Heart right ventricle (tissue), 16 donors: ENCODE measurements at regions of chr3 and their contacts with region 1.

Region 1: GRCh38 chr3:129058441-129059200 is 2.0 kb upstream of the GP9 start:
- DNase-seq: no peak
- ATAC-seq: peak in 1 of 8 donors; percentile 28
- H3K4me3 ChIP-seq: no peak overlapping the region
- H3K27ac ChIP-seq: no peak overlapping the region
- H3K4me1 ChIP-seq: peaks cover 0 to 30% (median 5%) of the 10 kb centered on the region in 9 donors
- H3K27me3 ChIP-seq: no peaks in the 10 kb centered on the region
- CTCF ChIP-seq: peak in 1 of 9 donors; percentile 5

Region 2: DNA sequence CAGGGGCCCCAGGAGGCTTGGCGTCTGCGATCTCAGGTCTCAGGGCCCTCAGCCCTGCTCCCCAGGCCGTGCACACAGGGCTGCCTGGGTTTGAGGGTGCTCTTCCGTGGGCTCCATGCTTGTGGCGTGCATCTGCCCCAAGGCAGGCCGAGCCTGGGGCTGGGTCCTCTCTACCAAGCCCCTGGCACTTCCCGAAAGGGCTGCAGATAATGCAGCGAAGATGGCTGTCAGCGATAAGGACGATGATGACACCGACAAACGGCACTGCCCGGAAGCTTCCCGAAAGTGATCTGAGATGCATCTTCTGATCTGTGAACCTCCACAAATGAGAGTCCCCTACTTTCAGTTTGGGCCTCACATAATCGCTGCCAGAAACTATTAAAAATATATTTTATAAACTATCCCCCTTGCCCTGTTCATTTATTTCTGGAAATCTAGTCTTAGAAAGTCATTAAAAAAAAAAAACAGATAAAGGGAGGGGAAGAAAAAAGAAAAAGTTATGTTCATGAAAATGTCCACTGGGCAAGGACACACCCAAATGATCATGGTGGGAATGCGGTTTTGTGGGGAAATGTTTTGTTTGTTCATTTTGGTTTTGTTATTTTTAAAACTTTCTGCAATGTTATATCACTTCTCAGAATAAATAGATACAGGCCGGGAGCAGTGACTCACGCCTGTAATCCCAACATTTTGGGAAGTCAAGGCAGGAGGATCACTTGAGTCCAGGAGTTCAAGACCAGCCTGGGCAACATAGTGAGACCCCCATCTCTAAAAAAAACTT is 459.5 kb before region 1 on chr3:
- intact Hi-C with region 1: no loop called
- DNase-seq: no peak
- ATAC-seq: no peak
- H3K4me3 ChIP-seq: no peak overlapping the region
- H3K27ac ChIP-seq: no peak overlapping the region
- H3K4me1 ChIP-seq: peaks cover 0 to 18% (median 0%) of the 10 kb centered on the region in 9 donors
- H3K27me3 ChIP-seq: no peaks in the 10 kb centered on the region
- CTCF ChIP-seq: no peak

Region 3: GRCh38 chr3:129119365-129120100 is 60.9 kb after region 1 on chr3:
- intact Hi-C with region 1: loop called in 2 of 10 experiments (anchors 5 to 10 kb)
- DNase-seq: no peak
- ATAC-seq: no peak
- H3K4me3 ChIP-seq: peak overlapping the region; percentile 73 to 97 (median 90)
- H3K27ac ChIP-seq: peak overlapping the region in 9 of 10 donors; percentile 45 to 98 (median 94)
- H3K4me1 ChIP-seq: peaks cover 12 to 60% (median 37%) of the 10 kb centered on the region in 9 donors
- H3K27me3 ChIP-seq: no peaks in the 10 kb centered on the region
- CTCF ChIP-seq: no peak